Transverse colon (tissue), 4 donors: ENCODE measurements at regions of chr7 and their contacts with region 1.

Region 1: GRCh38 chr7:134669845-134670373 is 23.3 kb downstream of the BPGM start:
- DNase-seq: peak; percentile 44
- H3K4me3 ChIP-seq: no peak overlapping the region
- H3K27ac ChIP-seq: peak overlapping the region in 1 of 4 donors; percentile 5
- H3K4me1 ChIP-seq: peaks cover 0 to 10% (median 4%) of the 10 kb centered on the region in 4 donors
- H3K27me3 ChIP-seq: no peaks in the 10 kb centered on the region
- CTCF ChIP-seq: no peak
- EP300 ChIP-seq: no peak
- POLR2A ChIP-seq: no peak

Region 2: GRCh38 chr7:134654104-134654775 is 15.7 kb before region 1 on chr7:
- in situ Hi-C with region 1: no loop called
- intact Hi-C with region 1: no loop called
- DNase-seq: no peak
- H3K4me3 ChIP-seq: no peak overlapping the region
- H3K27ac ChIP-seq: no peak overlapping the region
- H3K4me1 ChIP-seq: no peaks in the 10 kb centered on the region
- H3K27me3 ChIP-seq: no peaks in the 10 kb centered on the region
- CTCF ChIP-seq: no peak
- EP300 ChIP-seq: no peak
- POLR2A ChIP-seq: no peak

Region 3: GRCh38 chr7:135186841-135187253 is 516.9 kb after region 1 on chr7:
- in situ Hi-C with region 1: loop called in 1 of 4 experiments (anchors 25 kb)
- intact Hi-C with region 1: no loop called
- DNase-seq: no peak
- H3K4me3 ChIP-seq: no peak overlapping the region
- H3K27ac ChIP-seq: no peak overlapping the region
- H3K4me1 ChIP-seq: no peaks in the 10 kb centered on the region
- H3K27me3 ChIP-seq: no peaks in the 10 kb centered on the region
- CTCF ChIP-seq: no peak
- EP300 ChIP-seq: no peak
- POLR2A ChIP-seq: no peak